GM12878 (cell line): ENCODE measurements at regions of chr6 and their contacts with region 1.

Region 1: GRCh38 chr6:122803171-122803661 is 14.2 kb downstream of the SMPDL3A start:
- DNase-seq: no peak
- ATAC-seq: no peak
- H3K4me3 ChIP-seq: no peak overlapping the region
- H3K27ac ChIP-seq: no peak overlapping the region
- H3K4me1 ChIP-seq: no peaks in the 10 kb centered on the region
- H3K27me3 ChIP-seq: no peaks in the 10 kb centered on the region
- CTCF ChIP-seq: no peak
- EP300 ChIP-seq: no peak
- POLR2A ChIP-seq: no peak
- RAD21 ChIP-seq: no peak

Region 2: DNA sequence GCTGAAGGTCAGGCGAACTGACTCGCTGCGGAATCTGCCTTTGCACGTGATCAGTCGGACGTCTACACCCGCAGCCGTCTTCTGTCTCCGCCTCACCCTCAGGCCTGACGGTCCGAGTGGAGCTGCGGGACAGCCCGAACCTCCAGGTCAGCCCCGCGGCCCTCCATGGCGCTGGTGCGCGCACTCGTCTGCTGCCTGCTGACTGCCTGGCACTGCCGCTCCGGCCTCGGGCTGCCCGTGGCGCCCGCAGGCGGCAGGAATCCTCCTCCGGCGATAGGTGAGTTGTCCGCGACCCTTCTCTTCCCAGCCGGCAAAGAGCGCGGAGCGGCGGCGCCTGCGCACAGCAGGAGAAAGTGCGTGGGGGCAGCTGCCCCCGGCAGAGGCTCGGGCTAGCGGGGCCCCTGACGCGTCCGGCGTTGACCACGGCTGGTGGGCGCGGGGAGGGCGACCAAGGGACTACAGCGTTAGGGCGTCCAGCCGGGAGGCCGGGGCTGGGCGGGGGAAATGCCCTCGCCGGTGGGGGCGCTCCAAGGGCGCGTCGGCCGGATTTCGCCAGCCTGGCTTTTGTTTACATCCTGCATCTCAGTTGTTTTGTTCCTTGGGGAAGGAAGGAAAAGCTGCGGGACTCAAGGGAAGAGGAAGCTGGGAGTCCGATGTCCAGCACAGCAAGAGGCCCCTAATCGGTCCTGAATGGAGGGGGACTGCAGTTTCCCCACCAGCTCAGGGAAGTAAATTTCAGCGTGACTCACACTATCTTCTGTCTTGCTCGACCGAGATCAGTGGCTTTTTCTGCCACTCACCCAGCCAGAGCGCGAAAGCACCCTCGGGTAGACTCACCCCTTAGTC is 13.8 kb before region 1 on chr6 and contains the start of gene SMPDL3A:
- CTCF ChIA-PET with region 1: interaction called, 14 read pairs
- POLR2A ChIA-PET with region 1: interaction called, 15 read pairs
- RAD21 ChIA-PET with region 1: interaction called, 8 read pairs
- SMC1A ChIA-PET with region 1: interaction called, 42 read pairs
- in situ Hi-C with region 1: no loop called
- intact Hi-C with region 1: no loop called
- DNase-seq: no peak
- ATAC-seq: peak; percentile 82
- H3K4me3 ChIP-seq: peak within 1 kb of the TSS; percentile 15; the same call in 1 of the 2 replicates
- H3K27ac ChIP-seq: no peak within 1 kb of the TSS
- H3K4me1 ChIP-seq: no peaks in the 10 kb centered on the region
- H3K27me3 ChIP-seq: peaks cover 7 to 16% of the 10 kb centered on the region in 2 experiments
- CTCF ChIP-seq: peak; percentile 3 to 38 (median 19); a peak in 2 of 6 replicates
- EP300 ChIP-seq: no peak
- POLR2A ChIP-seq: no peak
- RAD21 ChIP-seq: no peak
- polyA plus RNA-seq, gene SMPDL3A: 0.05 to 0.07 TPM

Region 3: DNA sequence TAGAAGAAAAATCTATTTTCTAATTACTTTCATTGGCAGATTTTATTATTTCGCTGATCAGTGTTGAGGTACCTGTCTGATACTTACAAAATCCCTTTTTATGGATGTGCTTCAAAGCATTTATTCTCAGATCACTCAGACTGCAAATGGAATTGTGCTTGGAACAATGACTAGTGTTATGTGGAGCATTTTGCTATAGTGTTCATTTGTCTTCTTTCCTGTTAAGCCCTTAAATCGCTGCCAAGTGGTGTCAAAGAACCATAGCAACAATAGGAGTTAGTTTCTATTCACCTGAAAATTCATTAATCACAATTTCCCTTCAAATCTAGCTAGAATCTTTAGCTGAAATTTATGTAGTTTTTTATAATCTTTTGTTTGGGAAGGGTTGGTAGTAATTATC is 15.7 kb after region 1 on chr6:
- CTCF ChIA-PET with region 1: interaction called, 12 read pairs
- POLR2A ChIA-PET with region 1: interaction called, 3 read pairs
- RAD21 ChIA-PET with region 1: interaction called, 5 read pairs
- SMC1A ChIA-PET with region 1: interaction called, 11 read pairs
- in situ Hi-C with region 1: no loop called
- intact Hi-C with region 1: no loop called
- DNase-seq: no peak
- ATAC-seq: no peak
- H3K4me3 ChIP-seq: no peak overlapping the region
- H3K27ac ChIP-seq: no peak overlapping the region
- H3K4me1 ChIP-seq: no peaks in the 10 kb centered on the region
- H3K27me3 ChIP-seq: no peaks in the 10 kb centered on the region; a peak in 1 of 4 replicates
- CTCF ChIP-seq: no peak
- EP300 ChIP-seq: no peak
- POLR2A ChIP-seq: no peak
- RAD21 ChIP-seq: no peak

Region 4: DNA sequence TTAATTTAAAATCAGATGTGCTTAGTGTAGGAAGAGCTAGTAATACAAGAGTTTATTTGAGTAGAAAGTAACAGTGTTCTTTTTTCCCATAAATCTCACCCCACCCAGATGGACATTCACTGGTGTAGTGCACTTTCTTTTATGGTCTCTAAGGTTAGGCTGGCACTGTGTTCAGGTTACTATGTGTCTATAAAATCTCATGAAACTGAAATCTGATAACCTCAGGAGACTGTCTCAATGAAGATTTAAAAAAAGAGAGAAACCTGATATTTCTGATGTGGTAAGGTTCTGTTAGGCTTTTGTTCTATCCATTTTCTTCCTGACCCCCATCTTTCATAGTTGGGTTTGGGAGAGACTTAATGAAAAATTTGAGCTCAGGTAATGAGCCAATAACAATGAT is 91.6 kb after region 1 on chr6:
- CTCF ChIA-PET with region 1: no interaction called
- POLR2A ChIA-PET with region 1: no interaction called
- RAD21 ChIA-PET with region 1: no interaction called
- SMC1A ChIA-PET with region 1: no interaction called
- in situ Hi-C with region 1: no loop called
- intact Hi-C with region 1: no loop called
- DNase-seq: no peak
- ATAC-seq: no peak
- H3K4me3 ChIP-seq: no peak overlapping the region
- H3K27ac ChIP-seq: no peak overlapping the region
- H3K4me1 ChIP-seq: no peaks in the 10 kb centered on the region
- H3K27me3 ChIP-seq: no peaks in the 10 kb centered on the region
- CTCF ChIP-seq: no peak
- EP300 ChIP-seq: no peak
- POLR2A ChIP-seq: no peak
- RAD21 ChIP-seq: no peak